GM12878 (cell line): ENCODE measurements at regions of chr7 and their contacts with region 1.

Region 1: DNA sequence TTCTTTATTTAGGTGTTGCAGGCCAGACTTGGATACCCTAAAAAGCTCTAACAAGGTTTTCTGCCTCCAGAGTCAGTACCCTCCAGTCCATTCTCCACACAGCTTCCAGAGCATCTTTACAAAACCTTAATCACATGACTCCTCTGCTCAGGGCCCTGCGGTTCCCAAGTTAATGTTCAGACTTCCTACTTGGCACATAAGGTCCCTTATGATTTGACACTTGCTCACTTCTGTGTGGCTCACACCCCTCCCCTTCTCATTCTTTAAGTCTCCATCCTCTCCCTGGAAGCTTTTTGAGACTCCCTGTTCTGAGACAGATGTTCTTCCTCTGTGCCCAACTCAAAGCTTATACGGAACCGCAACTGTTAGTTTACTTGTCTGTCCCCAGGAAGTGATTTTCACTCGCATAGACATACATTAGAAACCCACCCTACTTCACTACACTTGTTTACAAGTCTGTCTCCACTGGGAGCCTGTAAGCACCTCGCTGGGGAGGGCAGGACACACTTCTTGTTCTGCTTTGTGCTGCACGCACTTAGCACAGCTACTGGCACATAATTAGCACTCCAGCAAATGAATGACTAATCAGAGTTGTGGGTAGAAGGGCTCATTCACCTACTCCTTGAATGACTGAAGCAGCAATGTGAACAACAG is 154.3 kb upstream of the LAMB4 start:
- DNase-seq: no peak
- ATAC-seq: peak; percentile 92
- H3K4me3 ChIP-seq: no peak overlapping the region
- H3K27ac ChIP-seq: no peak overlapping the region
- H3K4me1 ChIP-seq: no peaks in the 10 kb centered on the region
- H3K27me3 ChIP-seq: peaks cover 2 to 5% of the 10 kb centered on the region in 2 experiments; a peak in 3 of 4 replicates
- CTCF ChIP-seq: no peak
- EP300 ChIP-seq: peak in 1 of 2 experiments; percentile 37; a peak in 2 of 4 replicates
- POLR2A ChIP-seq: no peak
- RAD21 ChIP-seq: no peak

Region 2: GRCh38 chr7:108270385-108271015 is 14.0 kb before region 1 on chr7:
- CTCF ChIA-PET with region 1: interaction called, 4 read pairs
- POLR2A ChIA-PET with region 1: no interaction called
- RAD21 ChIA-PET with region 1: no interaction called
- SMC1A ChIA-PET with region 1: interaction called, 21 read pairs
- in situ Hi-C with region 1: no loop called
- intact Hi-C with region 1: no loop called
- DNase-seq: no peak
- ATAC-seq: peak; percentile 89
- H3K4me3 ChIP-seq: no peak overlapping the region
- H3K27ac ChIP-seq: no peak overlapping the region
- H3K4me1 ChIP-seq: no peaks in the 10 kb centered on the region
- H3K27me3 ChIP-seq: no peaks in the 10 kb centered on the region
- CTCF ChIP-seq: no peak
- EP300 ChIP-seq: peak; percentile 68 to 75; a peak in 2 of 4 replicates
- POLR2A ChIP-seq: no peak
- RAD21 ChIP-seq: no peak